ENCODE measurements at regions of chr2 and their contacts with region 1.

Region 1: GRCh38 chr2:168961450-168962229 is 60.5 kb downstream of the G6PC2 start:
- DNase-seq: peak in 1 of 2 donors; percentile 31
- ATAC-seq: peak; percentile 66 to 86 (median 70)
- H3K4me3 ChIP-seq: no peak overlapping the region
- H3K27ac ChIP-seq: no peak overlapping the region
- H3K4me1 ChIP-seq: peaks cover 0 to 10% (median 0%) of the 10 kb centered on the region in 9 donors
- H3K27me3 ChIP-seq: peaks cover 0 to 1% (median 0%) of the 10 kb centered on the region in 7 donors
- CTCF ChIP-seq: peak; percentile 52 to 89 (median 82)

Region 2: GRCh38 chr2:169014780-169015179 is 53.1 kb after region 1 on chr2:
- intact Hi-C with region 1: no loop called
- DNase-seq: no peak
- ATAC-seq: no peak
- H3K4me3 ChIP-seq: no peak overlapping the region
- H3K27ac ChIP-seq: no peak overlapping the region
- H3K4me1 ChIP-seq: peaks cover 0 to 18% (median 6%) of the 10 kb centered on the region in 9 donors
- H3K27me3 ChIP-seq: no peaks in the 10 kb centered on the region
- CTCF ChIP-seq: no peak

Region 3: DNA sequence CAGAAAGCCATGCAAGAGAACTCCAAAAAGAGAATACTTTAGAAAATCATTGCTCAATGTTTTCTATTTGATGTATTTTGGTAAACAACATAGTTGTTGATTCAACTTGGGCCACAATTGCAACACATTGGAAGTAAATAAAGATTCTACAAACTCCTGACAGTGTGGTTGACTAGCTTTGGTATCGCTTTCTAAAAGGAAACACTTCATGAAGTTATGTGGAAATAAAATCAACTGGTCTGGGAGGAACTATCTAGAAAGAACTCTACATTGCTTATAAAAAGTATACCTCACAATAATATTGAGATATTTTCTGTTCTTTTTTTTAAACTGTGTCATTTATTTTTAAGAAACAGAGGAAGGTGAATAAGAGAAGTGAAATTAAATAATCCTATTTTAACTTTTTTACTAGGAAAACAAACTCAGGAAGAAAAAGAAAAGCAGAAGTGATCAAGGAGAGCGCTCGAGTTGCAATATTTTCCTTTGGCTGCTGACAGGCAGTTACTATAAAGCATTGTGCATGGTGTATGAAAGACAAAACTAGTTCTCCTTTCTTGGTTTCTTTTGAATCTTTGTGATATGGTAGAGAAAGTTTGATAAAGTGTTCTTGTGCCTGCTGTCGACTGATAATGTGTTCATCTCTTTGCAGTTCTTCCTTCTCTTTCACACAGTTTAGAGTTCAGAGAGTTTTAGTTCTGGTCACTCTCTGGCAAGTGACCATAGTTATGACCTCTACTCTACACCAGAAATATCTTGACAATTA is 110.7 kb after region 1 on chr2:
- intact Hi-C with region 1: loop called in 1 of 10 experiments (anchors 10 kb)
- DNase-seq: no peak
- ATAC-seq: peak in 6 of 8 donors; percentile 49 to 84 (median 61)
- H3K4me3 ChIP-seq: peak overlapping the region in 1 of 10 donors; percentile 35
- H3K27ac ChIP-seq: peak overlapping the region in 1 of 10 donors; percentile 65
- H3K4me1 ChIP-seq: peaks cover 0 to 36% (median 0%) of the 10 kb centered on the region in 9 donors
- H3K27me3 ChIP-seq: no peaks in the 10 kb centered on the region
- CTCF ChIP-seq: no peak

Region 4: DNA sequence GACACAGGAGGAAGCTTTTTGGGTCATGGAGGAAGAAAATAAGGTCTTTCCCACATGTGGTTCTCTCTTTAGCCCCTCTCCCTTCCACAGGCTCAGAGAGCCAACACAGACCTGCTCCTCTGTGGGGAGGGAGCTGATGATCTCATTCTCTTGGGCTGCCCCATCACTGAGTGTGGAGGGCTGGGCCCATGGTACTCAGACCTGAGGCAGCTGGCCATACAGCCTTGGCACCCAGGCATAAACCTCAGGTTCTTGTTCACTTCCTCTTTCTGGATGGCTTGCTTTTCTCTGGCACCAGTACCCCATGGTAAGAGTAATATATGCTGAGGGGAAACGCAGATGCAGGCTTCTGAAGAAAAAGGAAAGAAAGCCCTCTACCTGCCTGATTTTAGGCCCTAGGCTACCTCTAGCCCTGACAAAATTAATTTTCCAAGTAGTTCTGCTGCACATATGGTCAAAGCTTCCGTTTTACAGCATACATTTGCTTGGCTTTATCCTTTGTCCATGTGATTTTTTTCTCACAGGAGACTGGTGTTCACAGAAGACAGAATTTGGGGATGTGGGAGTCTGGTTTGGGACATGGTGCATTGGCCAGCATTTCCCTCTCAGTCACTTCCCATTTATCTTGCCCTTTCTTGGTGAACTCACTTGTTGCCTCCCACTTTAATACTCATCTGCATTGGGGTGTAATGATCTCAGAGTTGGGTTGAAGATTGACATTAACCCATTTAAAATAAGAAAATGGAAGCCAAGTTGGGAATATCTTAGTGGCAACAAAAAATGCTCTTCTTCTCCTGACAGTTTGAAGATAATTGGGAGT is 118.8 kb after region 1 on chr2:
- intact Hi-C with region 1: loop called in 2 of 10 experiments (anchors 10 kb)
- DNase-seq: no peak
- ATAC-seq: peak in 3 of 8 donors; percentile 25 to 52 (median 47)
- H3K4me3 ChIP-seq: no peak overlapping the region
- H3K27ac ChIP-seq: no peak overlapping the region
- H3K4me1 ChIP-seq: peaks cover 0 to 47% (median 6%) of the 10 kb centered on the region in 9 donors
- H3K27me3 ChIP-seq: no peaks in the 10 kb centered on the region
- CTCF ChIP-seq: no peak

Region 5: DNA sequence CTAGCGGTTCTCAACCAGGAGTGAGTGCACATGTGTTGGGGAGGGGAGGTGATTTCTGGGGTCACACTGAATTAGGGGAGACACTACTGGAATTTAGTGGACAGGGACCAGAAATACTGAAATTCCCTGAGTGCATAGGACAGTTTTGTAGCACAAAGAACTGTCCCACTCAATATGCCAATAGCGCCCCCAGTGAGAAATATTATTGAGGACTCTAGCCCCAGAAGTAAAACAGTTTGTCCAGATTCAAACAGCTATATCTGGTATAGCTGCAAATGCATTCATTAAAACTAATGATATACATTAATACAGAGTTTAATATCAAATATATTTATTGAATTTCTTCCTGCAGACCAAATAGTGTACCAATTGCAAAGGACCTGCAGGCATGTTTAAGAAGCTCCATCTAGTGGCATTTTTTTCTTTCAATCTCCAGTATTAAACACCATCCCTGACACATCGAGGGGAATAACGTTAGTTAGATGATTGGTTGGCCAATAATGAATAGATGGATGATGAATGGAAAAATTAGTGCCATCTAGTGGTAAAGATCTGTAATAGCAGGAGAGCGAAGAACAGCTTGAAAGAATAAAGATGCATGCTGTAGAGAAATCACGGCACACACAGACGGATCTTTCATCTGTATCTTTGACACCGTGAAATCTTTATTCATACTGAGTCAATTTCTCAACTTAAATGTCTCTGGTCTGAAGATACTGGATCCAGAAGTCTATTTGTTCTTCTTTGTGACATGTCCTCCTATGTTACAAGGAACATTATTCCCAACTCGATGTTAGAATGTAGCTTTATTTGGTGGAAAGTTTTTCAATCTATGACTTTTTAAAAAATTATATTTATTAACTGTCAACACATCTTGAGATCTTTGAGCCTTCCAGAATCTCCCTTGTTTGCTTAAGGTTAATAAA is 170.2 kb after region 1 on chr2:
- intact Hi-C with region 1: loop called in 5 of 10 experiments (anchors 5 to 10 kb)
- DNase-seq: no peak
- ATAC-seq: peak in 3 of 8 donors; percentile 33 to 47 (median 39)
- H3K4me3 ChIP-seq: no peak overlapping the region
- H3K27ac ChIP-seq: no peak overlapping the region
- H3K4me1 ChIP-seq: peaks cover 0 to 2% (median 0%) of the 10 kb centered on the region in 9 donors
- H3K27me3 ChIP-seq: no peaks in the 10 kb centered on the region
- CTCF ChIP-seq: peak; percentile 62 to 87 (median 82)

Region 6: DNA sequence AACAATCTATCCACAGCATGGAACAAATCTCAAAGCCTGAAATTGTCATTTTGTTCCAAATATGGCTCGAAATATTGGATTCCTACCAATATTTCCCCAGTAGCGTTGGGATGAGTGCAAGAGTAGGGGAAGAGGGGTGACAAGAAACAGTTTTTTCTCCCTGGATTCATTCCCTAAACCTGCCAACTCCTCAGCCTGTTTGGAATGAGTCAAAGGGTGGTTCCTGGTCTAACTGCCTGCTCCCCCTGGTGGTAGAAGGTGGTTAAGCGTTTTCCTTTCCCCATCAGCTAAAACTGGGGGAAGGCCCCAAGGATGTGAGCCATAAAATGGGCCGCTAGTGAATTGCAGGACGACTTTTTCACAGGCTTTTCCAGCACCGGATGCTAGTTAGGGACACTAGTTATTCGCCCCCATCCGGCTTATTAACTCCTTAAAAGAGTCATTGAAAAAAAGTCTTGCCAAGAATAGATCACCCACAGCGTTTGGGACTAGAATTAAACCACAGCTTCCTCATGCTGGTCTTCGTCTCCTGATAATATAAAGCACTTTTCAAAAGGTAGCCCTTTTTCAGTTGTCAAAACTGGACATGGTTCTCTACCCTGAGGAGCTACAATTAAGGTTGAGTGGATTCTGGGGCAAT is 180.2 kb after region 1 on chr2:
- intact Hi-C with region 1: loop called in 6 of 10 experiments (anchors 5 to 10 kb)
- DNase-seq: peak in 1 of 2 donors; percentile 51
- ATAC-seq: peak in 5 of 8 donors; percentile 37 to 67 (median 57)
- H3K4me3 ChIP-seq: no peak overlapping the region
- H3K27ac ChIP-seq: no peak overlapping the region
- H3K4me1 ChIP-seq: peaks cover 0 to 15% (median 0%) of the 10 kb centered on the region in 9 donors
- H3K27me3 ChIP-seq: no peaks in the 10 kb centered on the region
- CTCF ChIP-seq: peak; percentile 34 to 82 (median 73)

Region 7: DNA sequence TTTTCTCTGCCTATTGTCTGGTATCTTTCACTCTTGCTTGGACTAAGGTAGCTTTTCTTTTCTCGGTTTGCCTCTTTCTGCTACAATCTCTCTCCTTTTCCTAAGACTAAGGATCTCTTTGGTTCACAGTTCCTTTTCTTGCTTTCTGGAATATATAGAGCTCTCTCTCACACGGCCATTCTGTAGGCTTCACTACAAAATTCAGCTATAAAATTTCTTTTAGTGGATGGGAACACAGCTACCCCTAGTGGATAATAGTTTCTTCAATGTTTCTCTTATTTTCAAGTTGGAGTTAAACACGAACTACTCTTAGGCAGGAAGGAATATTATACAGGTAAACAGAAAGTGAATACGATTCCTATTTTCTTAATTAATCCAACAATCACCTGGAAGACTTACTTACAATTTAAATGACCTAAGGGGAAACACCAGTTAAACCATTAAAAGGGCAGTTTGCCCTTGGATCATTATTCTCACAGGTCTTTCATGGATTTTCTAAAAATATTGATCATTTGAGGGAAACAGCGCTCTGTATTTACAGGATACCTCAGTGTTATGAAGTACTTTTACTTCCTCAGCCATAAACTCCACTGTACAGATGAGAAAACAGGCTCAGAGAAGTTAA is 260.2 kb after region 1 on chr2:
- intact Hi-C with region 1: loop called in 3 of 10 experiments (anchors 5 to 10 kb)
- DNase-seq: no peak
- ATAC-seq: no peak
- H3K4me3 ChIP-seq: no peak overlapping the region
- H3K27ac ChIP-seq: no peak overlapping the region
- H3K4me1 ChIP-seq: no peaks in the 10 kb centered on the region
- H3K27me3 ChIP-seq: no peaks in the 10 kb centered on the region
- CTCF ChIP-seq: peak in 6 of 9 donors; percentile 29 to 50 (median 37)

Region 8: GRCh38 chr2:169397697-169398096 is 436.1 kb after region 1 on chr2:
- intact Hi-C with region 1: loop called in 1 of 10 experiments (anchors 5 kb)
- DNase-seq: no peak
- ATAC-seq: no peak
- H3K4me3 ChIP-seq: no peak overlapping the region
- H3K27ac ChIP-seq: no peak overlapping the region
- H3K4me1 ChIP-seq: no peaks in the 10 kb centered on the region
- H3K27me3 ChIP-seq: peaks cover 0 to 17% (median 5%) of the 10 kb centered on the region in 7 donors
- CTCF ChIP-seq: peak in 5 of 9 donors; percentile 10 to 39 (median 25)

Measured in heart right ventricle (tissue), 16 donors.